Caco-2 (cell line): ENCODE measurements at regions of chr12 and their contacts with region 1.

Region 1: DNA sequence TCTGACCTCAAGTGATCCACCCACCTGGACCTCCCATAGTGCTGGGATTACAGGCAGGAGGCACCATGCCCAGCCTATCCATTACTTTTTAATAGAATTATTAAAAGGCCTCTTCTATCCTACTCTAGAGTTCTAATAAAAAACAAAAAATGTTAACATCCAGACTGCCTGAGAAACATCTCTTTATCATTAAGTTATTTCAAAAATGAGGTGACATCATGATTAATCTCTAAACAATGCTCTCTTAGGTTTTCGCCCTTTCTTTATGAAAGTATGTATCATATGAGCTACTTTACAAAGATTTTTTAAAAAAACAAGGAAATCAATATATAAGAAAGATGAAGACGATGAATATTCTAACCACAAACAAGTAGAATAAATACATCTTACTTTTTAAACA is 52.6 kb downstream of the FGD6 start:
- DNase-seq: no peak
- H3K4me3 ChIP-seq: peak overlapping the region; percentile 29
- H3K4me3 Mint-ChIP-seq: peak overlapping the region; percentile 71
- H3K27ac Mint-ChIP-seq: peak overlapping the region; percentile 71
- H3K4me1 ChIP-seq: peaks cover 40% of the 10 kb centered on the region
- H3K4me1 Mint-ChIP-seq: peaks cover 40% of the 10 kb centered on the region
- H3K27me3 ChIP-seq: no peaks in the 10 kb centered on the region
- H3K27me3 Mint-ChIP-seq: no peaks in the 10 kb centered on the region
- CTCF ChIP-seq: no peak

Region 2: DNA sequence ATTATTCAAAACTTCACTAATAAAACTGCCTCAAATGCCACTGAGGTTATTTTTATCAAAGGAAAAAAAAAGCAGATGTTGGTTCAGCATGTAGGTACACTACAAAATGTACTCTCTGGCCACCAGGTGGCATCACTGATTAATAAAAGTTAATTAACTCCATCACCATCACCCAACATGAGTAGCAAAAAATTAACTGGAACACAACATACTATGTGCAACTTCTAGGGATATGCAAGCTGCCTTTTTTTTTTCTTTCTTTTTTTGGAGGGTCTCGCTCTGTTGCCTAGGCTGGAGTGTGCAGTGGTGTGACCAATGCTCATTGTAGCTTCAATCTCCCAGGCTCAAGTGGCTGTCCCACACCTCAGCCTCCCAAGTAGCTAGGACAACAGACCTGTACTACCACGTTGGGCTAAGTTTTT is 47.5 kb before region 1 on chr12:
- CTCF ChIA-PET with region 1: no interaction called
- POLR2A ChIA-PET with region 1: no interaction called
- intact Hi-C with region 1: no loop called
- DNase-seq: peak; percentile 57 to 68
- H3K4me3 ChIP-seq: no peak overlapping the region
- H3K4me3 Mint-ChIP-seq: no peak overlapping the region
- H3K27ac Mint-ChIP-seq: no peak overlapping the region
- H3K4me1 ChIP-seq: 0 out of 2 replicates have a peak, but pooled peaks cover 4% of the 10 kb centered on the region
- H3K4me1 Mint-ChIP-seq: no peaks in the 10 kb centered on the region
- H3K27me3 ChIP-seq: no peaks in the 10 kb centered on the region
- H3K27me3 Mint-ChIP-seq: no peaks in the 10 kb centered on the region
- CTCF ChIP-seq: peak; percentile 48 to 74

Region 3: DNA sequence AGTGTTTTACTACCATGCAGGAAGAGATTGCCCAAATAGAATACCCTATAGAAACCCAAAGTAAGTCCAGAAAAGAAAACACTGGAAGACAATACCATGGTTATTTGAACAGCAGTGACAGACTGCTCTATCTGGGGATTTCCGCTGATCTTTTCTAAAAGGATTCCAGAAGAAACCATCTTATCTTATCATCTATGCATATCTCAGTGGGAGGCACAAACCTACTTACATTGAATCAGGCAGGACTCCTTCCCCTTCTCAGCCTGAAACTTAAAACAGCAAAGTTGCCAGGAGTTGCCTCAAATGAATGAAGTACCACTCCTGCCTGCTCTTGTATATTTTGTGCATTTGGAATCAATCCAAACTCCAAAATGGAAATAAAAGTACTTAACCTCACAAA is 34.6 kb before region 1 on chr12:
- CTCF ChIA-PET with region 1: no interaction called
- POLR2A ChIA-PET with region 1: no interaction called
- intact Hi-C with region 1: loop called (anchors 2 kb)
- DNase-seq: peak in 1 of 2 experiments; percentile 43
- H3K4me3 ChIP-seq: no peak overlapping the region
- H3K4me3 Mint-ChIP-seq: no peak overlapping the region
- H3K27ac Mint-ChIP-seq: peak overlapping the region; percentile 8
- H3K4me1 ChIP-seq: peaks cover 29% of the 10 kb centered on the region
- H3K4me1 Mint-ChIP-seq: peaks cover 23% of the 10 kb centered on the region
- H3K27me3 ChIP-seq: no peaks in the 10 kb centered on the region
- H3K27me3 Mint-ChIP-seq: no peaks in the 10 kb centered on the region
- CTCF ChIP-seq: no peak

Region 4: DNA sequence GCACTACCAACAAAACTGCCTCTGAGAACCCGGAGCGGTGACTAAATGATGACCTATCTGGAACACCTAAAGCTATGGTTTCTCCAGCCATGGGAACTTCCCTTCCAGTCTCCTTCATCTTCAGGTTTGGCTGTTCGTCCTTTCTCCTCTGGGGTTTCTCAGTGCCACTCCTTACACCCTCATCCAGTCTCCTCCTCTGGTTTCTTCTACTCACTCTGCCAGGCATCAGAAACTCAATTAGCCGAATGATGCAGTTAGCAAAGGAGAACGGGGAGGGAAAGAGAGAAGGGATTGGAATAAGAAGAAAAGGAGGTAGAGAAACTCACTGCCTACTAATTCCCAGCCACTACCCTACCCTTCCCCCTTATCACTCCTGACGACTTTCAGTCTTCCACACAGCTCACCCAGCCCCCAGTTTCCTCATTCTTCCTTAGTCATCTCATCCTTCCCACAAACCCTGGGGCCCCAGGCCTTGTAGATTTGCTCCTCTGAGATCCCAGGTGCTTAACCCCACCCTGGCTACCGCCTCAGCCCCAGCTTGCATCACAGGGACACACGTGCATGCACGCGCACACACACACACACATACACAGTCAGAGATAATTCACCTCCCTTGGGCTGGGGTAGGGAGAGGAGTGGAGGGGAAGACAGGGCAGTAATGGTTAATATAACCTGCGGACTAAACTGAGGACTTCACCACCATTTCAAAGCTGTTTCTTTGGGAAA is 39.6 kb after region 1 on chr12:
- CTCF ChIA-PET with region 1: no interaction called
- POLR2A ChIA-PET with region 1: no interaction called
- intact Hi-C with region 1: loop called (anchors 5 kb)
- DNase-seq: peak; percentile 89 to 96
- H3K4me3 ChIP-seq: no peak overlapping the region
- H3K4me3 Mint-ChIP-seq: peak overlapping the region; percentile 62
- H3K27ac Mint-ChIP-seq: peak overlapping the region; percentile 82
- H3K4me1 ChIP-seq: peaks cover 61% of the 10 kb centered on the region
- H3K4me1 Mint-ChIP-seq: peaks cover 52% of the 10 kb centered on the region
- H3K27me3 ChIP-seq: no peaks in the 10 kb centered on the region
- H3K27me3 Mint-ChIP-seq: no peaks in the 10 kb centered on the region
- CTCF ChIP-seq: no peak